Caco-2 (cell line): ENCODE measurements at regions of chr20 and their contacts with region 1.

Region 1: DNA sequence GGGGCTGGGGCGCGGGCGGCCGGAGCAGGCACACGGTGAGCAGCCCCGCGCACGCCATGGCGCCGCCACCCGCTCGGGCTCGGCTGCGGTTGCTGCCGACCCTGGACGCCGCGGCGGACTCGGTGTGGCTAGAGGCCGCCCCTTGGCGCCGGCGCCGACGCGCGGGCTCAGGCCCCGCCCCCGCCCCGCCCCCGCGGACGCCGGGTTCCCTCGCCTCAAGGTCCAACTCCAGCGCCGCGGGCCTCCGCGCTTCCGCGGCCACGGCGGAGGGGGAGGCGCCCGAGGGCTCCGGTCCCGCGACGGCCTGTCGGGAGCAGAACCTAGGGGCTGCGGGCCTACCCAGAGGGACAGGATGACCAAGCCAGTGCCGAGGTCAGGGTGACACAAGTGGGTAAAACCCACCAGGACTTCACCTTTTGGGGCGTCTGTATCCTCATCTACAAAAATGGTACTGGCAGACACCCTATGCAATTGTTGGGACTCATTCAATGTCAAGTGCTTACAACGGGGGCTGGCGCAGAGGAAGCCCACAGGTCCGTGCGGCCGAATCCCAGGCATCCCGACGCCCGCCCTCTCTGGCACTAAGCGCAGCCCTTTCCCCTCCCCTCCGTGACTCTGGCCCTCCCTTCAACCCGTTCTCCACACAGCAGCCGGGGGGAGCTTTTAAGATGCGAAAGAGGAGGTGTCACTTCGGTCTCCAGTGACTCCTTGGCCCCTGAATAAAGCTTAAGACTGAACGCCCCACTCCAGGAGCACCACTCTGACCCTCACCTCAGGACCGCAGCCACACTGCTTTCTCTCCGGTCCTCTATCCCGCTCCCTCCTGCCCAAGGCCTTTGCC is at the start of gene NECAB3:
- DNase-seq: peak; percentile 91 to 98
- H3K4me3 ChIP-seq: peak within 1 kb of the TSS; percentile 85
- H3K4me3 Mint-ChIP-seq: peak within 1 kb of the TSS; percentile 99
- H3K27ac Mint-ChIP-seq: peak within 1 kb of the TSS; percentile 98
- H3K4me1 ChIP-seq: peaks cover 18% of the 10 kb centered on the region
- H3K4me1 Mint-ChIP-seq: peaks cover 39% of the 10 kb centered on the region
- H3K27me3 ChIP-seq: no peaks in the 10 kb centered on the region
- H3K27me3 Mint-ChIP-seq: no peaks in the 10 kb centered on the region
- CTCF ChIP-seq: no peak
- total RNA-seq, gene NECAB3: 98.4 and 105 TPM in 2 replicates

Region 2: GRCh38 chr20:33686100-33686983 is 11.8 kb after region 1 on chr20 and contains the start of gene E2F1:
- CTCF ChIA-PET with region 1: no interaction called
- POLR2A ChIA-PET with region 1: interaction called, 4 read pairs
- intact Hi-C with region 1: loop called (anchors 1 kb)
- DNase-seq: peak; percentile 99 to 100
- H3K4me3 ChIP-seq: peak within 1 kb of the TSS; percentile 80
- H3K4me3 Mint-ChIP-seq: peak within 1 kb of the TSS; percentile 68
- H3K27ac Mint-ChIP-seq: peak within 1 kb of the TSS; percentile 78
- H3K4me1 ChIP-seq: peaks cover 46% of the 10 kb centered on the region
- H3K4me1 Mint-ChIP-seq: peaks cover 59% of the 10 kb centered on the region
- H3K27me3 ChIP-seq: no peaks in the 10 kb centered on the region
- H3K27me3 Mint-ChIP-seq: no peaks in the 10 kb centered on the region
- CTCF ChIP-seq: peak; percentile 56 to 64
- total RNA-seq, gene E2F1: 67.5 and 74.7 TPM in 2 replicates

Region 3: GRCh38 chr20:33719989-33720709 is 45.6 kb after region 1 on chr20 and contains the start of gene PXMP4:
- CTCF ChIA-PET with region 1: interaction called, 4 read pairs
- POLR2A ChIA-PET with region 1: interaction called, 3 read pairs
- intact Hi-C with region 1: loop called (anchors 1 kb)
- DNase-seq: peak; percentile 99 to 100
- H3K4me3 ChIP-seq: peak within 1 kb of the TSS; percentile 65
- H3K4me3 Mint-ChIP-seq: peak within 1 kb of the TSS; percentile 71
- H3K27ac Mint-ChIP-seq: peak within 1 kb of the TSS; percentile 33
- H3K4me1 ChIP-seq: peaks cover 22% of the 10 kb centered on the region
- H3K4me1 Mint-ChIP-seq: no peaks in the 10 kb centered on the region
- H3K27me3 ChIP-seq: no peaks in the 10 kb centered on the region
- H3K27me3 Mint-ChIP-seq: no peaks in the 10 kb centered on the region
- CTCF ChIP-seq: no peak
- total RNA-seq, gene PXMP4: 37.3 and 39.5 TPM in 2 replicates